ENCODE measurements at regions of chr3 and their contacts with region 1.

Region 1: GRCh38 chr3:11271986-11272904 is at the start of gene ATG7:
- DNase-seq: peak; percentile 97
- ATAC-seq: peak; percentile 97
- H3K4me3 Mint-ChIP-seq: peak within 1 kb of the TSS; percentile 94
- H3K27ac Mint-ChIP-seq: peak within 1 kb of the TSS; percentile 94
- H3K4me1 Mint-ChIP-seq: peaks cover 29% of the 10 kb centered on the region
- H3K27me3 Mint-ChIP-seq: no peaks in the 10 kb centered on the region
- CTCF ChIP-seq: no peak
- total RNA-seq, gene ATG7: 49.0 and 51.7 TPM in 2 replicates

Region 2: DNA sequence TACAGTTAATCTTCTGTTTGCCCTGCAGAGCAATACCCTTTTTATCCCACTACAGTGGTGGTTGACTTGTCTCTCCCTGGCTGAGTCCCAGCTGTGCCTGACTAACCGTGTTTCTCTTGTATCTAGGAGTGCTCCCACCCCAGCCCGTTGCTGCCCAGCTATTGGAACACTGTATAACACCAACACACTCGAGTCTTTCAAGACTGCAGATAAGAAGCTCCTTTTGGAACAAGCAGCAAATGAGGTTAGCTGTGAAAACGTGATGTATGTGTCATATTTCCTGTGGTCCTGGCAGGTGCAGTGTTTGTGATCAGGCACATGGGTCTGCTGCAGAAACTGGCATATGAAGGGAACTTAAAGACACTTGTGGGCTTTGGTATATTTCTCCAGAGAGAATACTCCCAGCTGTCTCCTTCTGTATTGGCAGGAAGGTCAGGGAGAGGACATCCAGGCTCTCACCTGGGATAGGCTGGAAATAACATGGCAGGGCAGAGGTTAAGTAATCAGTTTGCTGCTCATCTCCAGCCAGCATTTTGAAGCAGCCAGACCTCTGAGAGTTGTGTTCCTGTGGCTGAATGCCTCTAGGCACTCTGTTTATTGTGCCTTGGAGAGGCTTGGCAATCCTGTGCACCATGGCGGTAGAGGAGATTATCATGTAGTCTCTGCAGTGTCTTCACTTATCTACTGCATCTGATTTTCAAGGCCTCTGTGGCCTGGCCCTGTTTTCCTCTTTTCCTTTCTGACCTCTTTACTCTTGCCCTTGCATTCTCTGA is 34.8 kb after region 1 on chr3:
- CTCF ChIA-PET with region 1: no interaction called
- POLR2A ChIA-PET with region 1: interaction called, 12 read pairs
- intact Hi-C with region 1: loop called (anchors 5 kb)
- DNase-seq: no peak
- ATAC-seq: peak; percentile 28
- H3K4me3 Mint-ChIP-seq: no peak overlapping the region
- H3K27ac Mint-ChIP-seq: no peak overlapping the region
- H3K4me1 Mint-ChIP-seq: peaks cover 11% of the 10 kb centered on the region
- H3K27me3 Mint-ChIP-seq: no peaks in the 10 kb centered on the region
- CTCF ChIP-seq: no peak

Region 3: GRCh38 chr3:11846281-11847034 is 574.2 kb after region 1 on chr3 and contains the start of gene TAMM41:
- CTCF ChIA-PET with region 1: no interaction called
- POLR2A ChIA-PET with region 1: interaction called, 5 read pairs
- intact Hi-C with region 1: loop called (anchors 2 kb)
- DNase-seq: peak; percentile 77
- ATAC-seq: peak; percentile 100
- H3K4me3 Mint-ChIP-seq: peak within 1 kb of the TSS; percentile 99
- H3K27ac Mint-ChIP-seq: peak within 1 kb of the TSS; percentile 95
- H3K4me1 Mint-ChIP-seq: peaks cover 37% of the 10 kb centered on the region
- H3K27me3 Mint-ChIP-seq: no peaks in the 10 kb centered on the region
- CTCF ChIP-seq: no peak
- total RNA-seq, gene TAMM41: 28.1 and 39.0 TPM in 2 replicates